GM12878 (cell line): ENCODE measurements at regions of chr17 and their contacts with region 1.

Region 1: DNA sequence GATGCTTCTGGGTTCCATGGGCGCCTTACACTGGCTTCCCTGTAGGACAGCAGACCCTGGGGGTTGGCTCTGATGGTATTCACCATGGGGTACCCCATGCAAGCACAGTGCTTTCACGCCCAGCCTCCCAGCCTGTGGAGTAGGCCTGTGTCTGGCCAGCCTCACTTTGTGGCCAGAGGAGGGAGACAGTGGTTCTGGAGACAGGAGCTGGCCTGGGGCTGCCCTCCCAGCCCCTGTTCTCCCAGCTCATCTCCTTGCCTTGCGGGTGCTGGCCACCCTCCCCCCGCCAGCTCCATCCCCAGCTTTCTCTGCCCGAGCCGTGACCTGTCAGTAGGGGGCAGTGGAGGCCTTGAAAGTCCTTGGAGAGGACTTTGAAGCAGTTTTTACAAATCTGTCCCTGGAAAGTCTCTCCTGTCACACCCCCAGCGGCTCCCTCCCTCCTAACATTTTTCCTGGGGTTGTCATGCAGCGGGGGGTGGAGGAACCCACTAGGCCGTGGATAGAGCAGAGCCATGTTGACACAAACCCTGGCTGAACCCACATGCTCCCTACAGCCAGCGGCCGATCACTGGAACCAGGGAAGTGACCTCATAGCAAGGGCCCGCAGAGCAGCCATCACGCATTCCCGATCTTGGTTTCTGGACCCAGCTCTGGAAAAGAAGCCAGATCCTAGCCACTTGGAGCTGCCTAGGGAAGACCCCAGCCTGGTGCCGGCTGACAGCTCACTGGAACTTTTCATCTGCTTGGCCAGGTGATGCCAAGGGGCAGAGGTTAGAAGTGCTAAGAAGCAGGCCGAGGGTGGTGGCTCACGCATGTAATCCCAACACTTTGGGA is 289.4 kb downstream of the SEC14L1 start:
- DNase-seq: no peak
- ATAC-seq: peak; percentile 75
- H3K4me3 ChIP-seq: no peak overlapping the region
- H3K27ac ChIP-seq: no peak overlapping the region
- H3K4me1 ChIP-seq: peaks cover 74% of the 10 kb centered on the region
- H3K27me3 ChIP-seq: no peaks in the 10 kb centered on the region
- CTCF ChIP-seq: peak; percentile 81 to 89 (median 88)
- EP300 ChIP-seq: no peak
- POLR2A ChIP-seq: no peak
- RAD21 ChIP-seq: peak; percentile 94

Region 2: GRCh38 chr17:77331301-77331864 is 98.8 kb before region 1 on chr17:
- CTCF ChIA-PET with region 1: interaction called, 59 read pairs
- POLR2A ChIA-PET with region 1: interaction called, 18 read pairs
- RAD21 ChIA-PET with region 1: interaction called, 56 read pairs
- SMC1A ChIA-PET with region 1: interaction called, 52 read pairs
- in situ Hi-C with region 1: loop called (anchors 25 kb)
- intact Hi-C with region 1: loop called (anchors 2 kb)
- DNase-seq: peak; percentile 75
- ATAC-seq: peak; percentile 95
- H3K4me3 ChIP-seq: peak overlapping the region; percentile 39; the same call in 1 of the 2 replicates
- H3K27ac ChIP-seq: peak overlapping the region; percentile 51
- H3K4me1 ChIP-seq: peaks cover 23% of the 10 kb centered on the region
- H3K27me3 ChIP-seq: no peaks in the 10 kb centered on the region
- CTCF ChIP-seq: peak; percentile 91 to 98 (median 93)
- EP300 ChIP-seq: no peak
- POLR2A ChIP-seq: peak; percentile 57; the same call in 1 of the 2 replicates
- RAD21 ChIP-seq: peak; percentile 96

Region 3: GRCh38 chr17:77414811-77415400 is 15.2 kb before region 1 on chr17:
- CTCF ChIA-PET with region 1: interaction called, 31 read pairs
- POLR2A ChIA-PET with region 1: interaction called, 6 read pairs
- RAD21 ChIA-PET with region 1: interaction called, 4 read pairs
- SMC1A ChIA-PET with region 1: interaction called, 13 read pairs
- in situ Hi-C with region 1: no loop called
- intact Hi-C with region 1: no loop called
- DNase-seq: no peak
- ATAC-seq: no peak
- H3K4me3 ChIP-seq: no peak overlapping the region
- H3K27ac ChIP-seq: no peak overlapping the region
- H3K4me1 ChIP-seq: peaks cover 2% of the 10 kb centered on the region
- H3K27me3 ChIP-seq: no peaks in the 10 kb centered on the region
- CTCF ChIP-seq: no peak
- EP300 ChIP-seq: no peak
- POLR2A ChIP-seq: no peak
- RAD21 ChIP-seq: no peak

Region 4: GRCh38 chr17:77451245-77451893 is 21.2 kb after region 1 on chr17:
- CTCF ChIA-PET with region 1: interaction called, 53 read pairs
- POLR2A ChIA-PET with region 1: interaction called, 4 read pairs
- RAD21 ChIA-PET with region 1: interaction called, 16 read pairs
- SMC1A ChIA-PET with region 1: interaction called, 35 read pairs
- in situ Hi-C with region 1: no loop called
- intact Hi-C with region 1: no loop called
- DNase-seq: no peak
- ATAC-seq: peak; percentile 71
- H3K4me3 ChIP-seq: peak overlapping the region; percentile 94
- H3K27ac ChIP-seq: peak overlapping the region; percentile 99
- H3K4me1 ChIP-seq: peaks cover 50% of the 10 kb centered on the region
- H3K27me3 ChIP-seq: no peaks in the 10 kb centered on the region
- CTCF ChIP-seq: no peak
- EP300 ChIP-seq: no peak
- POLR2A ChIP-seq: peak; percentile 83
- RAD21 ChIP-seq: 0 out of 2 replicates have a peak, but pooled peaks have one; percentile 1

Region 5: DNA sequence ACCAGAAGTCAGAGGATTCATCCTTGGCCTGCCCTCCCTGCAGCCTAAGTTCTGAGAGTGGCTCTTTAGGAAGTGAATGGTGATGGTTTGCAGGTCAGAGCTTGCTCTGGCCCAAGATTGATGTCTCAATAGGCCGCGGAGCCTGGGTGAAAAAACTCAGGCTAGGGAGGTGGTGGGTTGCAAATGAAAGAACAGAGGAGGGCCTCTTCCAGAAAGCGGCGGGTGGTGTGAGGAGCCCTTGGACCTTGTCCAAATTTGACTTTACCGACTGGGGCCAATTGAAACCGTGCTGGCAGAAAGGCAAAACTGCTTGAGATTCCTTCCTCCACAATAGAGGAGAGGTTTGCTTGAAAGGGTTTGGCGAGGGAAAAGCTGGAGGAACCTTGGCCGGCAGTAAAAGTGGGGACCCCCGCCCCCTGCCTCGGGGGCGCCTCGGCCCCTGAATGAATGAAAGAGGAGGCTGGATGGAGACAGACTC is 41.9 kb after region 1 on chr17:
- CTCF ChIA-PET with region 1: interaction called, 62 read pairs
- POLR2A ChIA-PET with region 1: interaction called, 21 read pairs
- RAD21 ChIA-PET with region 1: interaction called, 32 read pairs
- SMC1A ChIA-PET with region 1: interaction called, 45 read pairs
- in situ Hi-C with region 1: no loop called
- intact Hi-C with region 1: no loop called
- DNase-seq: no peak
- ATAC-seq: peak; percentile 34
- H3K4me3 ChIP-seq: peak overlapping the region; percentile 48
- H3K27ac ChIP-seq: peak overlapping the region; percentile 90
- H3K4me1 ChIP-seq: peaks cover 63% of the 10 kb centered on the region
- H3K27me3 ChIP-seq: no peaks in the 10 kb centered on the region
- CTCF ChIP-seq: no peak
- EP300 ChIP-seq: no peak
- POLR2A ChIP-seq: no peak
- RAD21 ChIP-seq: no peak

Region 6: GRCh38 chr17:77494664-77495435 is 64.7 kb after region 1 on chr17:
- CTCF ChIA-PET with region 1: interaction called, 99 read pairs
- POLR2A ChIA-PET with region 1: interaction called, 4 read pairs
- RAD21 ChIA-PET with region 1: interaction called, 59 read pairs
- SMC1A ChIA-PET with region 1: interaction called, 66 read pairs
- in situ Hi-C with region 1: loop called (anchors 5 kb)
- intact Hi-C with region 1: loop called (anchors 1 kb)
- DNase-seq: no peak
- ATAC-seq: peak; percentile 89
- H3K4me3 ChIP-seq: no peak overlapping the region
- H3K27ac ChIP-seq: no peak overlapping the region
- H3K4me1 ChIP-seq: peaks cover 16% of the 10 kb centered on the region
- H3K27me3 ChIP-seq: no peaks in the 10 kb centered on the region
- CTCF ChIP-seq: peak; percentile 87 to 93 (median 92)
- EP300 ChIP-seq: no peak
- POLR2A ChIP-seq: peak; percentile 51; the same call in 1 of the 2 replicates
- RAD21 ChIP-seq: peak; percentile 85

Region 7: DNA sequence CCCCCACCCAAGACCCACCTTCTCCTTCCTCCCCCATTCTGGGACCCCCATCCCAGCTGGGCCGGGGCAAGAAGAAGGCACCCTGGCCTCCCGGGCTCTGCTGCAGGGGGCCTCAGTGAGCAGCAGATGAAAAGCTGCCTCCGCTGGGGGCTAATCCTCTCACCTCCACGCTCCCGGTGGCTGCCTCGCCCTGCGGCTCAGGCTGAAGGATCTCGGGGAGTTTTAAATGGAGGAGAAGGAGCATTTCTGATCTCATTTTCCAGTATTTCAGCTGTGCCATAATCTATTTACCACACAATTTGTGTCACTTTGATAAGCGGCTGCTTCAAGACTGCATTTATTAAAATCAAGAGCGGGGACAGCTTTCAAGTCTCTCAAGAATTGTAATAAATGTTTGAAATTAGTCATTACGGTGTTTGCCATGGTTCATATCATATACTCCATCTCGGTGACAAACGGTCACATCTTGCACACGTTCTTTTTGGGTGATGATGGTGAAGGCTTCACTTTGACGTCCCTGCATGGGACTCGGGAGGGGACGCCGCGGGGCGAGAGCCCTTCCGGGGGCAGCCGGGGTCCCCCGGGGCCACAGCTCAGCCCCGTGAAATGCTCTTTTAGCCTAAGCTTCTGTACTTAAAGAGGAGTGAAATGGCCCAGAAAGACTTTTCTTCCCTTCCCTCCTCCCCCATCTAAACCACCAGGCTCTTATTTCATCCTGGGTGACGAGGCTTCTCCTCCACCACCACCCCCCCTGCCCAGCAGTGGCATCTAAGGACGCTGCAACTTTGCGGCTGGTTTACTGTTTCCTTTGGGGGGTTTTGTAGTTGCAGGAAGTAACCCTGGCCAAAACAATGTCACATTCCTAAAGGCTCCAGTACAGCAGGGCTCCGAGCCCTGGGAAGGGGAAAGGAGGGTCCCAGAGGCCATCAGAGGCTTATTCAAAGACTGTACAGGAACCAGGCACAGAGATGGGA is 215.2 kb after region 1 on chr17:
- CTCF ChIA-PET with region 1: no interaction called
- POLR2A ChIA-PET with region 1: no interaction called
- RAD21 ChIA-PET with region 1: no interaction called
- SMC1A ChIA-PET with region 1: no interaction called
- in situ Hi-C with region 1: no loop called
- intact Hi-C with region 1: no loop called
- DNase-seq: no peak
- ATAC-seq: no peak
- H3K4me3 ChIP-seq: no peak overlapping the region
- H3K27ac ChIP-seq: no peak overlapping the region
- H3K4me1 ChIP-seq: no peaks in the 10 kb centered on the region
- H3K27me3 ChIP-seq: peaks cover 3 to 8% of the 10 kb centered on the region in 2 experiments
- CTCF ChIP-seq: no peak
- EP300 ChIP-seq: no peak
- POLR2A ChIP-seq: no peak
- RAD21 ChIP-seq: no peak

Region 8: GRCh38 chr17:78013683-78014467 is 583.7 kb after region 1 on chr17:
- CTCF ChIA-PET with region 1: interaction called, 30 read pairs
- POLR2A ChIA-PET with region 1: no interaction called
- RAD21 ChIA-PET with region 1: interaction called, 12 read pairs
- SMC1A ChIA-PET with region 1: interaction called, 5 read pairs
- in situ Hi-C with region 1: no loop called
- intact Hi-C with region 1: no loop called
- DNase-seq: peak; percentile 20
- ATAC-seq: peak; percentile 74
- H3K4me3 ChIP-seq: no peak overlapping the region
- H3K27ac ChIP-seq: no peak overlapping the region
- H3K4me1 ChIP-seq: no peaks in the 10 kb centered on the region
- H3K27me3 ChIP-seq: no peaks in the 10 kb centered on the region
- CTCF ChIP-seq: peak; percentile 67 to 89 (median 79)
- EP300 ChIP-seq: no peak
- POLR2A ChIP-seq: no peak
- RAD21 ChIP-seq: peak; percentile 94